GM10248 (cell line): ENCODE measurements at regions of chr2 and their contacts with region 1.

Region 1: GRCh38 chr2:60550178-60550983 is 3.1 kb downstream of the BCL11A start:
- DNase-seq: peak; percentile 77
- CTCF ChIP-seq: peak; percentile 87

Region 2: DNA sequence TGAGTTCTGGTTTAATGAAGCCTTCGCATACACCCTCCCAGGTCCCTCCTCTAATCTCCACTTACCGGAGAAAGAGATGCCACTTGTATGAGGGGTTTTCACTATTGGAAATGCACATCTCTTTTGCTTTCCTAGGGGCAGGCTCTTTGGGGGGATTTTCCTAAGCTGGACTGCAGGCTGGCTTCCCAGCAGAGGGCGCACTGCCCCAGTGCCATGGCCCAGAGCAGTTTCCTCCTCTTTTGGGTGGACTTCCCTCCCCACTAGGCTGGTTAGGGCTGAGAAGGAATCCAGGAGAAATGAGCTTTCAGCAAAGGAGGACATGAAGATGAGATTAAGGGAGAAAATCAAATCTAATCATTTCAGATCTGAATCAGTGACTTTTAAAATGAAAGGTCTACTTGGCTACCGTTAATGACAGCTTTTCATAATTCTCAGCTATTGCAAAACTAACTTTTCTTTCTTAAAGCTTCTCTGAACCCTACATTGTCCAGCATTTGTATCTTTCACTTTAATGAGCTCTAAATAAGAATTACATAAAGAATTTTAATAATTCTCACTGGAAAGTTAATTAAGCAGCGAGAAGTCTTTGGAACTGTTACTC is 1525.1 kb before region 1 on chr2:
- CTCF ChIA-PET with region 1: interaction called, 22 read pairs
- POLR2A ChIA-PET with region 1: no interaction called
- DNase-seq: peak; percentile 24
- CTCF ChIP-seq: peak; percentile 77

Region 3: GRCh38 chr2:59301466-59302402 is 1248.6 kb before region 1 on chr2:
- CTCF ChIA-PET with region 1: interaction called, 11 read pairs
- POLR2A ChIA-PET with region 1: no interaction called
- DNase-seq: peak; percentile 9
- CTCF ChIP-seq: peak; percentile 47

Region 4: DNA sequence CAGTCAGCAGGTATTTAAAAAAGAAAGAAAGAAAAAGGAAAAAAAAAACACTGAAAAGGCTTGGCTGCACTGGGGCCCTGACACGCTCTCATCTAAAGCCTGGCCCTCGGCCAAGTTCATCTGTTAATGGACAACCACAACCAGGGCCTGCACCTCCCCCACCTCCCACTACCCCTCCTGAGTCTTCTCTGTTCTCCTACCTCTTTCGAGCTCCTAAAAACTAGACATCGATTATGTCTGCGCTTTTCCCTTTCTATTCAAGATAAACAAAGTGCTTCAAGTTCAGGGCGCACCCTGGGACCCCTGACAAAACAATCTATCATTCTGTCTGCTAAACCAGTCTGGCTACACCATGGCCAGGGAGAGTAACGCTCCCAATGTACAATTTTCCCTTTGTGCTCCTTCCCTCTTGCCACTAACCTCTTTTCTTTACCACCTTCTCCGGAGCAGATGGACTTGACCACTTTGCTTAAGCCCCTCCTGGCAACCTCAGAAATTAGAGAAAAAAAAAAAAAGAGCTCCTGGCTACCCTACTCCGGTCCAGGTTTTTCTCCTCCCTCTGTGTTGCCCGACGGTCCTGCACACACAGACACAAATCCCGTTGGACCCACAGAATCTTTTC is 19.6 kb before region 1 on chr2:
- CTCF ChIA-PET with region 1: interaction called, 13 read pairs
- POLR2A ChIA-PET with region 1: no interaction called
- DNase-seq: peak; percentile 59
- CTCF ChIP-seq: no peak

Region 5: DNA sequence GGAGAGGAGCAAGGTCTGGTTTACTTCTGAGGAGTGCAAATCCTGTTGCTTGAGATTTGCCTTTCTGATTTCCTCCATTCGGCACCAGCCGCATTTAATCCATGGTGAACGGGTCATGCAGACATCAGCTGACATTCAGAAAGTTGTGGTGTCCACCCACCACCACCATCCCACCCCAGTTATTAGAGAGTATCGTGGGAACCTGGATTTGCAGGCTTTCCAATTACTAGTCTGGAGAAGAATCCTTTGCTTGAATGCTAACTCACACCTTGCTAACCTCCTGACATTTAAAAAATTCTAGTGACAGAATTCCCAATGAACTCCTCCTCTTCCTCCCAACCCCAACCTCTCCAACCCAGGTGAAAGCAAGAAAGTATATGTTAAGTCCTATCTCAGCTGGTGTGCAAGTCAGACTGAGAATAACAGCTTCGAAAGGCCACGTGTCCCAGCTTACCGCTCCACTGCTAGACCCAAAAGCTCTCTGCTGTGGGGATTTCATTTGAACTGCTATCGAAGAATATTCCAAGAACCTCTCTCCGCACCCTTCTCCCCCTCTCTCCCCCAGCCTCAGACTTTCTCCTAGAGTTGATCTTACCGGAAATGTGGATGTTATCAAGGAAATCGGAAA is 14.6 kb before region 1 on chr2:
- CTCF ChIA-PET with region 1: interaction called, 13 read pairs
- POLR2A ChIA-PET with region 1: no interaction called
- DNase-seq: no peak
- CTCF ChIP-seq: no peak

Region 6: DNA sequence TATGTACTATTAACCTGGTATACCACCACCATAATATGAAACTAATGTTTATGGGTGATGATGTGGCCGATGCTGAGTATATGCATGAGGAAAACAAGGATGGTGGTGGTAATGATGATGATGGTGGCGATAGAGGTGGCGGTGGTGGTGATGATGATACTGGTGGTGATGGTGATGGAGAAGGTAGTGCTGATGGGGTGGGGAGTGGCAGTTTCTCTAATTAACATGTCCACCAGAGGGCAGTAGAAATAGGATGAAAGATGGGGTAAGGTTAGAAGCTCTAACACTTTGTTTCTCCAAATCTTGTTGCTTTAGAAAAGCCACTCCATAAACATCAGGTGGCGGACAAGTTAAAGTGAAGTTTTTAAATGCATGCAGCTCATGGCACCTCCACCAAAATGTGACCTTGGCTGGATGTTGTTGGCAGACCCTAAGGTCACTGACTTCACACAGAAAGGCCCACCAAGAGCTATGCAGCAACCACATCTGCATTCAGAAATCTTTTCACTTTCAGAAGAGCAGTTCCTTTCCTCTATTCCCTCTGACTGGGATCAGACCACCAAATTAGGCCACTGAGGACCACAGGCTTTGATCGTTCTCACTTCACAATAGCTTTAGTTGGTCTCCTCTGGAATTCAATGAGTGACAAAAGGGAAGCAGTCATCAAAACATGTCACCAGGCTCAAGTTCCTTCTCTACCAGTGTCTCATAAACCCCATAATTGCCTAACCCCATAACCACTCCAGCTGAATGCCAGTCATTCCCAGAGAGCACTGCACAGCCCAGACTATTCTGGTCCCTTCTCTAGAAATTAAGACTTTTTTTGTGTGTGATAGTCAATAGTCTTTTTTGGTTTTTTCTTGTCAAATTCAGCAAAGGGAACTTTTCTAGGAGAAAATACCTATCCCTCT is 10.6 kb after region 1 on chr2:
- CTCF ChIA-PET with region 1: interaction called, 27 read pairs
- POLR2A ChIA-PET with region 1: no interaction called
- DNase-seq: peak; percentile 41
- CTCF ChIP-seq: peak; percentile 62

Region 7: GRCh38 chr2:60581433-60582282 is 31.3 kb after region 1 on chr2:
- CTCF ChIA-PET with region 1: interaction called, 10 read pairs
- POLR2A ChIA-PET with region 1: no interaction called
- DNase-seq: peak; percentile 89
- CTCF ChIP-seq: peak; percentile 99

Region 8: GRCh38 chr2:60641811-60642788 is 91.7 kb after region 1 on chr2:
- CTCF ChIA-PET with region 1: no interaction called
- POLR2A ChIA-PET with region 1: no interaction called
- DNase-seq: peak; percentile 46
- CTCF ChIP-seq: peak; percentile 72